Right ventricle myocardium superior (tissue), 1 donor: ENCODE measurements at regions of chr10 and their contacts with region 1.

Region 1: GRCh38 chr10:131885391-131886161 is 15.2 kb upstream of the PPP2R2D start:
- DNase-seq: peak; percentile 85
- ATAC-seq: peak; percentile 98

Region 2: DNA sequence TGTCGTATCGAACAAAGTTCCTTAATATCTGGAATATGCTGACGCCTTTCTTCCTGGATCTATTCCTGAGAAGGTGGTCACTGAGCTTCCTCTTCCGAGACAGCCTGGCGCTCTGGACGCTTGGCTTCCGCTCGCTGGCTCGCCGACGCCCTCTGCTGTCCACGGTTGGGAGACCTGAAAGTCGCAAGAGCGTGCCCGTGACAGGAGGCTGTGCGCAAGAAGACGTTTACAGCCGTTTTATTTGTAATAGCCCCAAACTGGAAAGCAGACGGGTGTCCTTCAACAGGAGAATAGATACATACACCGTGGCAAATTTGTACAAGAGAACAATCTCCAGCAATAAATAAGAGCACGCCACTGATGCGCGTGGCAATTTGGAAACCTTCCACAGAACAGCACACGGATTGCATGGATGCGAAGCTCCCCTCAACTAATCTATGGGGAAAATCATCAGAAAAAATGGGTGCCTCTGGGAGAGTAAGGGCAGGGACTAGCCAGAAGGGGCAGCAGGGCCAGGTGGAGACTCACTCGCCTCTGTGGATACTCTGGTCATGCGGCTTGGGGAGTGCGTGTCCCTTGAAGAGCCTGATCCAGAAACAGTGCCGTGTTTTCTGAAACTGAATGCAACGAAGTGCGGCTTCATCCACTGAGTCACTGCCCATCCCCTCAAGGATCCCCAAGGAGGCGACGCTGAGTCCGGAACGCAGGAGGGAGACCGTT is 137.7 kb after region 1 on chr10:
- intact Hi-C with region 1: loop called (anchors 5 kb)
- DNase-seq: peak; percentile 90
- ATAC-seq: peak; percentile 97

Region 3: GRCh38 chr10:132142411-132143161 is 257.0 kb after region 1 on chr10:
- intact Hi-C with region 1: loop called (anchors 5 kb)
- DNase-seq: peak; percentile 61
- ATAC-seq: peak; percentile 88